Sigmoid colon (tissue), 7 donors: ENCODE measurements at regions of chr6 and their contacts with region 1.

Region 1: GRCh38 chr6:72084992-72085569 is 198.7 kb downstream of the RIMS1 start:
- DNase-seq: no peak
- H3K4me3 ChIP-seq: no peak overlapping the region
- H3K27ac ChIP-seq: no peak overlapping the region
- H3K4me1 ChIP-seq: no peaks in the 10 kb centered on the region
- H3K27me3 ChIP-seq: no peaks in the 10 kb centered on the region
- CTCF ChIP-seq: peak in 1 of 4 experiments; percentile 12
- EP300 ChIP-seq: no peak
- POLR2A ChIP-seq: no peak

Region 2: GRCh38 chr6:71012866-71013469 is 1072.1 kb before region 1 on chr6:
- intact Hi-C with region 1: no loop called
- DNase-seq: no peak
- H3K4me3 ChIP-seq: no peak overlapping the region
- H3K27ac ChIP-seq: no peak overlapping the region
- H3K4me1 ChIP-seq: no peaks in the 10 kb centered on the region
- H3K27me3 ChIP-seq: no peaks in the 10 kb centered on the region
- CTCF ChIP-seq: peak in 3 of 4 experiments; percentile 17 to 45 (median 32)
- EP300 ChIP-seq: no peak
- POLR2A ChIP-seq: no peak

Region 3: GRCh38 chr6:71537717-71538116 is 547.4 kb before region 1 on chr6:
- intact Hi-C with region 1: loop called (anchors 5 kb)
- DNase-seq: no peak
- H3K4me3 ChIP-seq: no peak overlapping the region
- H3K27ac ChIP-seq: no peak overlapping the region
- H3K4me1 ChIP-seq: no peaks in the 10 kb centered on the region
- H3K27me3 ChIP-seq: no peaks in the 10 kb centered on the region
- CTCF ChIP-seq: no peak
- EP300 ChIP-seq: no peak
- POLR2A ChIP-seq: no peak